ENCODE measurements at regions of chr13 and their contacts with region 1.

Region 1: GRCh38 chr13:74891610-74892009 is 590.4 kb downstream of the TBC1D4 start:
- DNase-seq: peak; percentile 29
- ATAC-seq: no peak
- H3K4me3 ChIP-seq: no peak overlapping the region
- H3K27ac ChIP-seq: no peak overlapping the region
- H3K4me1 ChIP-seq: no peaks in the 10 kb centered on the region
- H3K27me3 ChIP-seq: no peaks in the 10 kb centered on the region
- CTCF ChIP-seq: no peak
- POLR2A ChIP-seq: no peak
- RAD21 ChIP-seq: no peak

Region 2: DNA sequence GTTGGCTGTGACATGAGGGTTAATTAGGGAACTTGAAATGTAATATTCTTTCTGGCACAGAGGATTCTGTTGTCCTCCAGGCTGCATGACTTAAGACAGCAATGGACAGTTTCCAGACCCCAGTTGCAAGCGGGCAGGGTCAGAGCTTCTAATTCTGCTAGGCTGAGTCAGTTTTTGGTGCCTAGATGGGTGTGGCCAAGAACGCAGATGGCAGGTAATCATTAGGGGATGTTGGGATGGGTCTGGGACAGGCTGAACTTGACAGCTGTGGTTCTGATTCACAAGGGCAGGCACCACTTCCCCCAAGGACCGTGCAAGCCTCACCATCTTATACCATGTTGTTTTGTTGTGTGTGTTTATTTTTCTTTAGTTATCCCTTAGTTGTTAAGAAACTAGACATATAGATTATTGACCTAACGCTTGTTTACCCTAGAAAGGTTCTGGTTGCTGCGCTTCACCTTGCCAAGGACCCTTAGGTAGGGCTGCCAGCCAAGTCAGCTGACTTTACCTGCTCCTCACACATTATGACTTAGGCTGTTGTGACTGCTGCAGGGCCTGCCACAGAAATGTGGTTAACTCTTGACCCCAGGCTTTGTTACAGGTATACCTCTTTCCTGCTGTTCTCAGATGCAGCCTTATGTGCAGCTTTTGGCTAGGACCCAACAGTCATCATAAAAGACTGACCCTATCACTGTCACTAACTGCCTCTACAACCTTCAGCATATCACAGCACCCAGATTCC is 639.7 kb before region 1 on chr13:
- CTCF ChIA-PET with region 1: no interaction called
- POLR2A ChIA-PET with region 1: no interaction called
- dilution Hi-C with region 1: no loop called
- in situ Hi-C with region 1: no loop called
- intact Hi-C with region 1: no loop called
- DNase-seq: no peak
- ATAC-seq: no peak
- H3K4me3 ChIP-seq: no peak overlapping the region
- H3K27ac ChIP-seq: no peak overlapping the region
- H3K4me1 ChIP-seq: peaks cover 6% of the 10 kb centered on the region; the same call in 1 of the 2 replicates
- H3K27me3 ChIP-seq: no peaks in the 10 kb centered on the region
- CTCF ChIP-seq: no peak
- POLR2A ChIP-seq: no peak
- RAD21 ChIP-seq: no peak

Region 3: DNA sequence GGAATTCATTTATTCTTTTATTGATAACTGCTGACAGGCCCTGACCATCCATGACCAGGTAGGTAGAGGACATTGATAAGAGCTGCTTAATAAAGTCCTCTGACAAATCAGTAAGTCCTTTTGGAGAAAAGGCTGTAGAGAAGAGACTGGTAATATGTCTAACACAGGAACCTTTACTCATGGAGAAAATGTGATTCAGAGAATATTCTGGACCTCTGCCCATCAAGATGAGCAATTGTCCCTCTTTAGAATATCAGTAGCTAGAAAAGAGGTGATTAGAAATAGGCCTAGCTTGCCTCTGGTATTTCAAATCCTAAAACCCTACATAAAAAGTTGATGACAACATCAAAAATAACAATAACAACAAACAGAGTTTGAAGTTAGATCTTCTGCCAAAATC is 52.0 kb before region 1 on chr13:
- CTCF ChIA-PET with region 1: no interaction called
- POLR2A ChIA-PET with region 1: no interaction called
- dilution Hi-C with region 1: no loop called
- in situ Hi-C with region 1: no loop called
- intact Hi-C with region 1: no loop called
- DNase-seq: peak; percentile 13
- ATAC-seq: no peak
- H3K4me3 ChIP-seq: no peak overlapping the region
- H3K27ac ChIP-seq: no peak overlapping the region
- H3K4me1 ChIP-seq: no peaks in the 10 kb centered on the region
- H3K27me3 ChIP-seq: no peaks in the 10 kb centered on the region
- CTCF ChIP-seq: no peak
- POLR2A ChIP-seq: no peak
- RAD21 ChIP-seq: no peak

Region 4: DNA sequence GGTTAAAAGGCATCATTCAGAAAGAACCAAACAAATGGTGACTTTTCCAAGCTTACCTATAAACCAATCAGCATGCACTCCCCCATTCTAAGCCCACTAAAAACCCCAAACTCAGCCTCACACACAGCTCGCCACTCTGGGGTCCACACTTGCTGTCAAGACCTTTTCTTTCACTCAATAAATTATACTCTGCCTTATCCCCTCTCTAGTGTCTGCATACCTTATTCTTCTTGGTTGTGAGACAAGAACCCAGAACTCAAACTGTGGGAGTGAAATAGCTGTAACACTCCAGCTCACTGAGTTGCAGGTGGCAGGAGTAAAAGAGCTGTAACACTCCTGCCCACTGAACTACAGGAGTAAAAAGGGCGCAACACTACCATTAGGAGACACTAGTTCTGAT is 31.4 kb after region 1 on chr13:
- CTCF ChIA-PET with region 1: interaction called, 8 read pairs
- POLR2A ChIA-PET with region 1: interaction called, 13 read pairs
- dilution Hi-C with region 1: no loop called
- in situ Hi-C with region 1: no loop called
- intact Hi-C with region 1: no loop called
- DNase-seq: no peak
- ATAC-seq: no peak
- H3K4me3 ChIP-seq: no peak overlapping the region
- H3K27ac ChIP-seq: no peak overlapping the region
- H3K4me1 ChIP-seq: no peaks in the 10 kb centered on the region
- H3K27me3 ChIP-seq: no peaks in the 10 kb centered on the region
- CTCF ChIP-seq: no peak
- POLR2A ChIP-seq: no peak
- RAD21 ChIP-seq: no peak